T-cell (primary cell): ENCODE measurements at regions of chr1 and their contacts with region 1.

Region 1: GRCh38 chr1:151006327-151007052 is at the start of gene MINDY1:
- DNase-seq: peak in 7 of 35 experiments; percentile 19 to 55 (median 28)
- ATAC-seq: peak in 2 of 4 experiments; percentile 14 to 17
- H3K4me3 ChIP-seq: peak within 1 kb of the TSS; percentile 80 to 85
- H3K4me3 Mint-ChIP-seq: peak within 1 kb of the TSS; percentile 96 to 98 (median 98)
- H3K27ac ChIP-seq: peak within 1 kb of the TSS; percentile 97
- H3K27ac Mint-ChIP-seq: peak within 1 kb of the TSS; percentile 96 to 99
- H3K4me1 ChIP-seq: peaks cover 46 to 82% of the 10 kb centered on the region in 2 experiments
- H3K4me1 Mint-ChIP-seq: peaks cover 85 to 89% (median 89%) of the 10 kb centered on the region in 3 donors
- H3K27me3 ChIP-seq: no peaks in the 10 kb centered on the region
- H3K27me3 Mint-ChIP-seq: no peaks in the 10 kb centered on the region
- total RNA-seq, gene MINDY1: 15.3 to 26.8 (median 19.0) TPM

Region 2: GRCh38 chr1:151036363-151036762 is 29.9 kb after region 1 on chr1 and contains the start of gene BNIPL:
- CTCF ChIA-PET with region 1: no interaction called
- POLR2A ChIA-PET with region 1: no interaction called
- DNase-seq: no peak
- ATAC-seq: no peak
- H3K4me3 ChIP-seq: no peak within 1 kb of the TSS
- H3K4me3 Mint-ChIP-seq: no peak within 1 kb of the TSS
- H3K27ac ChIP-seq: no peak within 1 kb of the TSS
- H3K27ac Mint-ChIP-seq: peak within 1 kb of the TSS; percentile 63 to 82
- H3K4me1 ChIP-seq: no peaks in the 10 kb centered on the region
- H3K4me1 Mint-ChIP-seq: peaks cover 9 to 20% (median 11%) of the 10 kb centered on the region in 3 donors
- H3K27me3 ChIP-seq: no peaks in the 10 kb centered on the region
- H3K27me3 Mint-ChIP-seq: no peaks in the 10 kb centered on the region
- total RNA-seq, gene BNIPL: 0.54 to 2.6 (median 2.2) TPM

Region 3: DNA sequence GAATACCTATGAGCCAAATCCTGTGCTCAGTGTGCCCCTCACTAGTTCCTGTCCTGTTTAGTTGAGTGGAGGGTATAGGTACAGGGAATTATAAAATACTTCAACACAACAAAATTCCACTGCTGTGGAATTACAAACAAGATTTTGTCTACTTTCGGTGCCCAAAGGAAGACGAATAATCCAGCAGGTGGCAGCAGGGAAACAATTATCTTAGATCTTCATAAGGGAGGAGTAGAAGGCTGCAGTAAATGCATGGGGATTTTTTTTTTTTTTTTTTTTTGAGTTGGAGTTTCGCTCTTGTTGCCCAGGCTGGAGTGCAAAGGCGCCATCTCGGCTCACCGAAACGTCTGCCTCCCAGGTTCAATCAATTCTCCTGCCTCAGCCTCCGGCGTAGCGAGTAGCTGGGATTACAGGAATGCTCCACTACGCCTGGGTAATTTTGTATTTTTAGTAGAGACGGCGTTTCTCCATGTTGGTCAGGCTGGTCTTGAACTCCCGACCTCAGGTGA is 189.9 kb after region 1 on chr1:
- CTCF ChIA-PET with region 1: interaction called in 1 of 2 experiments, 14 read pairs
- POLR2A ChIA-PET with region 1: no interaction called
- DNase-seq: peak in 32 of 35 experiments; percentile 8 to 78 (median 40)
- ATAC-seq: peak in 1 of 4 experiments; percentile 28
- H3K4me3 ChIP-seq: no peak overlapping the region
- H3K4me3 Mint-ChIP-seq: peak overlapping the region in 2 of 3 donors; percentile 40 to 42
- H3K27ac ChIP-seq: no peak overlapping the region
- H3K27ac Mint-ChIP-seq: peak overlapping the region in 1 of 2 donors; percentile 69
- H3K4me1 ChIP-seq: peaks cover 16 to 28% of the 10 kb centered on the region in 2 experiments
- H3K4me1 Mint-ChIP-seq: peaks cover 34 to 37% (median 36%) of the 10 kb centered on the region in 3 donors
- H3K27me3 ChIP-seq: no peaks in the 10 kb centered on the region
- H3K27me3 Mint-ChIP-seq: no peaks in the 10 kb centered on the region